Activated CD4-positive, alpha-beta memory T cell treated with anti-CD3 and anti-CD28 coated beads for 36 hours (primary cell): ENCODE measurements at regions of chr1 and their contacts with region 1.

Region 1: GRCh38 chr1:204453141-204453772 is 41.3 kb downstream of the PIK3C2B start:
- DNase-seq: peak; percentile 89
- H3K4me3 Mint-ChIP-seq: peak overlapping the region; percentile 65
- H3K27ac Mint-ChIP-seq: peak overlapping the region; percentile 88
- H3K4me1 Mint-ChIP-seq: peaks cover 48% of the 10 kb centered on the region
- H3K27me3 Mint-ChIP-seq: no peaks in the 10 kb centered on the region

Region 2: DNA sequence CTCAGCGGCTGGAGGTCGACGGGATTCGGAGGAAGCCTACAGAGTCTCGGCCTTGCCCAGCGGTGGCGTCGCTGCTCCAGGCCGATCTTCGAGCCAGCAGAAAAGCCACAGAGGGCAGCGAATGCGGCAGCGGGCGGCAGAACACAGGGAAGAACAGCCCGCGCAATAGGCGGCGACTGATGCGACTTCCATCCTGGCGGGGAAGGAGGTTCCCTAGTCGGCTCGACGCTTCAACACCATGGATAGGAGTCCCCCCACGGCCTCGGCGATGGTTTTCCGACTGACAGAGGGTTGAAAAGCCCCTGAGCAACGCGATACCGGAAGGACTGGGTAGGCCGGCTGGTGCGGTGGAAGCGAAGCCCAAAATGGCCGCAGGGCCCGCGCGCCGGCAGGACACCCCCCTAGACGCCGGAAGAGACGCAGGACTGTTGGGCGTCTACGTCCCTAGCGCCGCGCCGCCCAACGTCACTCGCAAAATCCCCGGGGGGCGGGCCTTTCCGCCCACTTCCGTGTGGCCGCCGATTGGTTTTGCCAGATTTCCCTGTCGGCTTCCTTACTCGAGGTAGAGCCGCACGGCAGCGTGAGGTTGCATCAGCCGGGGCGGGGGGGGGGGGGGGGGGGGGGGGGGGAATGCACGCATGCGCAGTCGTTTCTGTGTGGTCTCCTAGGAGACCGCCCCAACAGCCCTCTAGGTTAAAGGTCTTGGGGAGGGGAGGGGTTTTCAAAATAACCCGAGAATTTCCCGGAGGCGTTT is 41.6 kb before region 1 on chr1 and contains the start of gene PPP1R15B:
- CTCF ChIA-PET with region 1: no interaction called
- POLR2A ChIA-PET with region 1: no interaction called
- intact Hi-C with region 1: loop called (anchors 5 kb)
- DNase-seq: peak; percentile 99
- H3K4me3 Mint-ChIP-seq: peak within 1 kb of the TSS; percentile 99
- H3K27ac Mint-ChIP-seq: peak within 1 kb of the TSS; percentile 98
- H3K4me1 Mint-ChIP-seq: peaks cover 12% of the 10 kb centered on the region
- H3K27me3 Mint-ChIP-seq: no peaks in the 10 kb centered on the region
- total RNA-seq, gene PPP1R15B: 54.9 to 57.1 TPM

Region 3: GRCh38 chr1:204465546-204466415 is 12.5 kb after region 1 on chr1:
- CTCF ChIA-PET with region 1: interaction called, 7 read pairs
- POLR2A ChIA-PET with region 1: interaction called, 3 read pairs
- intact Hi-C with region 1: loop called (anchors 1 kb)
- DNase-seq: no peak
- H3K4me3 Mint-ChIP-seq: no peak overlapping the region
- H3K27ac Mint-ChIP-seq: peak overlapping the region; percentile 39
- H3K4me1 Mint-ChIP-seq: peaks cover 60% of the 10 kb centered on the region
- H3K27me3 Mint-ChIP-seq: no peaks in the 10 kb centered on the region

Region 4: DNA sequence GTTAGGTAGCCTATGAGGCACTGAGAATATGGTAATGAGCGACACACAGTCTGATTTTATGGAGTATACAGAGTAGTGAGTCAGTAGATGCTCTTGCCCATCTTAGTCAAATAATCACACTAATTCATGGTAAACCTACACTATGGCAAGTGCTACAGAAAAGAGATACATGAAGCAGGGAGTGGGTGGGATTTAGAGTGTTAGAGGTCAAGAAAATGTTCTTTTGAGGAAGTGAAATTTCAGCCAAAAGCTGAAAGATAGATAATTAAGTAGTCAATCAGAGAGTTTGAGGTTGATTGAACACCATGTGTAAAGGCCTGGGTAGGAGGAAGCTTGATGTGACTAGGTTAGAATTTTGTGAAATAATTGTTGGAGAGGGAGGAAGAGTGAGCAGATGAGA is 77.7 kb after region 1 on chr1:
- CTCF ChIA-PET with region 1: no interaction called
- POLR2A ChIA-PET with region 1: no interaction called
- intact Hi-C with region 1: no loop called
- DNase-seq: no peak
- H3K4me3 Mint-ChIP-seq: no peak overlapping the region
- H3K27ac Mint-ChIP-seq: peak overlapping the region; percentile 30
- H3K4me1 Mint-ChIP-seq: peaks cover 16% of the 10 kb centered on the region
- H3K27me3 Mint-ChIP-seq: no peaks in the 10 kb centered on the region

Region 5: GRCh38 chr1:204819495-204819894 is 366.2 kb after region 1 on chr1:
- CTCF ChIA-PET with region 1: no interaction called
- POLR2A ChIA-PET with region 1: no interaction called
- intact Hi-C with region 1: no loop called
- DNase-seq: no peak
- H3K4me3 Mint-ChIP-seq: no peak overlapping the region
- H3K27ac Mint-ChIP-seq: no peak overlapping the region
- H3K4me1 Mint-ChIP-seq: no peaks in the 10 kb centered on the region
- H3K27me3 Mint-ChIP-seq: peaks cover 23% of the 10 kb centered on the region